PC-3 (cell line): ENCODE measurements at regions of chr7 and their contacts with region 1.

Region 1: GRCh38 chr7:137970253-137970975 is 31.5 kb downstream of the CREB3L2 start:
- DNase-seq: peak; percentile 51
- ATAC-seq: peak; percentile 85
- H3K4me3 ChIP-seq: no peak overlapping the region
- H3K27ac ChIP-seq: 0 out of 2 replicates have a peak overlapping the region, but pooled peaks have one; percentile 5
- H3K4me1 ChIP-seq: peaks cover 17% of the 10 kb centered on the region
- H3K27me3 ChIP-seq: no peaks in the 10 kb centered on the region
- CTCF ChIP-seq: no peak

Region 2: GRCh38 chr7:137957887-137958286 is 12.5 kb before region 1 on chr7:
- CTCF ChIA-PET with region 1: no interaction called
- POLR2A ChIA-PET with region 1: interaction called, 5 read pairs
- intact Hi-C with region 1: loop called (anchors 2 kb)
- DNase-seq: no peak
- ATAC-seq: no peak
- H3K4me3 ChIP-seq: no peak overlapping the region
- H3K27ac ChIP-seq: no peak overlapping the region
- H3K4me1 ChIP-seq: peaks cover 28% of the 10 kb centered on the region
- H3K27me3 ChIP-seq: no peaks in the 10 kb centered on the region
- CTCF ChIP-seq: no peak

Region 3: GRCh38 chr7:139116999-139117398 is 1146.6 kb after region 1 on chr7:
- CTCF ChIA-PET with region 1: interaction called, 14 read pairs
- POLR2A ChIA-PET with region 1: no interaction called
- intact Hi-C with region 1: no loop called
- DNase-seq: peak; percentile 11
- ATAC-seq: peak; percentile 27
- H3K4me3 ChIP-seq: no peak overlapping the region
- H3K27ac ChIP-seq: no peak overlapping the region
- H3K4me1 ChIP-seq: peaks cover 22% of the 10 kb centered on the region
- H3K27me3 ChIP-seq: no peaks in the 10 kb centered on the region
- CTCF ChIP-seq: no peak